H1 (cell line): ENCODE measurements at regions of chr16 and their contacts with region 1.

Region 1: DNA sequence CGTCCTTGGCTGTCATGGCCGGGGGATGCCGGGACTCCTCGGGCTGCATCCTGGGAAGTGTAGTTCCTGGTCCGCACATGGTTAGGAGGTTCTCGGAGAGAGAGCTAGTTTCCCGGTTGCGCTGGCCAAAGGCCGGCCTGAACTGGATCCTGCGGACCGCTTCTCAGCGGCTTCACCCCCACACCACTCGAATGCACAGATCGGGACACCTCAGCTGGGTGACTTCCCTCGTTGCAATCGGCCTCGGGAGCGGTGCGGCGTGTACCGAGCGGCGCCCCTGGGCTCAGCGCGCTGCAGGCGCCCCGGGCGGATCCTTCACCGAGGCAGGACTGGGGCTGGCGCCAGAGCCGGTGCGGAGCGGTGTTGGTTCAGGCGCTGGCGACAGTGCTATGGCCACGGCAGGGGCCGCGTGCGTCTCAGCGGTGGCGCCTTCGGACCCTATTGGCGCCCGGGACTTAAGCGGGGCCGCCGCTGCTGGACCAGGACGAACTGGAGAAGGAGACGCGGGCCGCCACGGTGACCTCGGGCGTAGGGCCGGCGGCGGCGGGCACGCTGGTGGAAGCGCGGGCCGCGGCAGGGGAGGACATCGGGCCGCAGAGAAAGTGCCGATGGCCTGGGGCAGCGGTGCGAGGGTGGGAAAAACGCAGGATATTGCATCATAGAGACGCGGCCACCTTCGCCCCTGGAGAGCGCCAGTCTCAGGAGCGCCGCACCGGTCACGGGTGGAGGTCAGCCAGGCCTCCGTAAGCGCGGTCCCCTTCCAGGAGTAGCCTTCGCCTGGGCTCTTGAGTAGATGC is 11.4 kb downstream of the ZNF629 start:
- DNase-seq: peak; percentile 78 to 89
- H3K4me3 ChIP-seq: peak overlapping the region; percentile 67 to 84 (median 76)
- H3K27ac ChIP-seq: peak overlapping the region; percentile 89
- H3K4me1 ChIP-seq: peaks cover 0 to 11% (median 5%) of the 10 kb centered on the region in 4 experiments; a peak in 5 of 7 replicates
- H3K27me3 ChIP-seq: no peaks in the 10 kb centered on the region
- CTCF ChIP-seq: no peak
- EP300 ChIP-seq: no peak
- POLR2A ChIP-seq: peak; percentile 85 to 87
- RAD21 ChIP-seq: no peak

Region 2: GRCh38 chr16:30731411-30731810 is 44.2 kb before region 1 on chr16:
- CTCF ChIA-PET with region 1: no interaction called
- POLR2A ChIA-PET with region 1: interaction called, 10 read pairs
- DNase-seq: no peak
- H3K4me3 ChIP-seq: no peak overlapping the region
- H3K27ac ChIP-seq: no peak overlapping the region
- H3K4me1 ChIP-seq: peaks cover 0 to 3% (median 3%) of the 10 kb centered on the region in 4 experiments; a peak in 2 of 7 replicates
- H3K27me3 ChIP-seq: no peaks in the 10 kb centered on the region
- CTCF ChIP-seq: no peak
- EP300 ChIP-seq: no peak
- POLR2A ChIP-seq: no peak
- RAD21 ChIP-seq: no peak

Region 3: DNA sequence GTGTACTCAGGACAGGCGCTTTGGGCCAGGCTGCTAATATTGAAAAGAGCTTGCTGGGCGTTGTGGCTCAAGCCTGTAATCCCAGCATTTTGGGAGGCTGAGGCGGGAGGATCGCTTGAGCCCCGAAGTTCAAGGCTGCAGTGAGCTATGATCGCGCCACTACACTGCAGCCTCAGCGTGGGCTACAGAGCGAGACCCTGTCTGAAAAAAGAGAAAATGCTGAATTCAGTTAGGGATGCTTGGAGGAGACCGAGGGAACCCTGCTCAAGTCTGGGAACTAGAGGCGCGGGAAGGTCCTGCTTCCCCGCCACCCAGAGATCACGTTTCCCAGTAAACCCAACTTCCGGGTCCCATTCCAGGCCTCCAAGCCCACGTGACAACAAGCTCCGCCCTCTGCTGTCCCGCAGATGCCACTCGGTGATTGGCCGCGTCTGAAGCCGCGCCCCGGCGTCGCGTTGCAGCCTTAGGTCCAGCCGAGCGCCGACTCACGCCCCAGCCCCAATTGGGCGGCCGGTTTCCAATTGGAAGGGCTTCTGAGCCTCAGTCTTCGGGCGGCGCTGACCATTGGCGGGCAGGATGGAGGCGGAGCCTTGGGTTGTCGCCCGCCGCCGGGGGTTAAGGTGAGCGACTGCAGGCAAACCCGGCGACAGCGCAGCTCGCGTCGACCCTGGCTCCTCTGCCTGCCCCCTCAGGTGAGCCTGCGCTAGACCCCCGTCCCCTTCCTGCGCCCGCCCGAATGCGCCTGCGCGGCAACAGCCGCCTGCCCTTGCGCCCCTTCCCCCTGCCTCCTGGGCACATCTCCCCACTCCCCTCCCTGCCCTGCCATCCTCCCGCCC is 27.6 kb before region 1 on chr16 and contains the start of gene PHKG2:
- CTCF ChIA-PET with region 1: no interaction called
- POLR2A ChIA-PET with region 1: interaction called, 59 read pairs
- DNase-seq: peak; percentile 96 to 97
- H3K4me3 ChIP-seq: peak within 1 kb of the TSS; percentile 54 to 81 (median 65)
- H3K27ac ChIP-seq: peak within 1 kb of the TSS; percentile 78
- H3K4me1 ChIP-seq: peaks cover 0 to 4% (median 0%) of the 10 kb centered on the region in 4 experiments; a peak in 2 of 7 replicates
- H3K27me3 ChIP-seq: no peaks in the 10 kb centered on the region
- CTCF ChIP-seq: no peak
- EP300 ChIP-seq: 0 out of 3 replicates have a peak, but pooled peaks of 1 of the 2 experiments have one; percentile 15
- POLR2A ChIP-seq: peak; percentile 78 to 92
- RAD21 ChIP-seq: no peak
- total RNA-seq, gene PHKG2: 36.0 and 37.2 TPM in 2 replicates

Region 4: DNA sequence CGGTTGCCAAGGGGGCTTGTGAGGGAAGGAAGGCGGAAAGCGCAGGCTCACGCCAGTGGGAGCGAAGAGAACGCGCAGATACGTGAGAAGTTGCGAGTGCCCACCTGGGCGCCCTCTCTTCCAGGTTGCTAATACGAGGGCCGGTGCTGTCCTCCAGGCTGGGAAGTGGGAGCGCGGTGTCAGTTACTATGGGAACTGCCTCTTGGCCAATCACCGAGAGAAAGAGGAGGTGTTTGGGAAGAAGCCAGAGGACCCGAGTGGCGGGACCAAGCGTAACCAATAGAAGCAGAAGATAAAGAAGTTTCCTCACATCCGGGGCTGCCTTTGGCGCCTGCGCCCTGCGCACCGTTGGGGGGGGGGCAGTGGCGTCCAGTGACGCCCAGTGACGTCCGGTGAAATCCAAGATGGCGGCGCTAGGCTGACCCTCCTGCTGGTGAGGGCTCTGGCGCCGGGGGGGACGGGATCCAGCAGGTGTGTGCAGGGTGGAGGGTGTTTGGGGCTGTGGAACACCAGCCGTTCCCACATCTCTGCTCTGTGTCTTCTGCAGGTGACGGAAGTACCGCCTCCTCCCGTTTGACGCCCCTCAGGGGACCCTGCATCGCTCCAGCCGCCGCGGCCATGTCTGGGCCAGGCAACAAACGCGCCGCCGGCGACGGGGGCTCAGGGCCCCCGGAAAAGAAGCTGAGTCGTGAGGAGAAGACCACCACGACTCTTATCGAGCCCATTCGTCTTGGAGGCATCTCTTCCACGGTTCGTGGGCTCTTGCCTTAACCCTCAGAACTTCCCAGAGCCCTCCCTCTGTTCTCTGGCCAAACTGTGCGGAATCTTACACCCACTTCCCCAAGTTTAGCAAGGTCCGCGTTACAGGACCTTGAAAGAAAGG is 13.4 kb before region 1 on chr16 and contains the starts of genes CFAP119 and RNF40:
- CTCF ChIA-PET with region 1: interaction called, 7 read pairs
- POLR2A ChIA-PET with region 1: interaction called, 63 read pairs
- DNase-seq: peak; percentile 86 to 98
- H3K4me3 ChIP-seq: peak within 1 kb of the TSS; percentile 80 to 97 (median 92)
- H3K27ac ChIP-seq: peak within 1 kb of the TSS; percentile 88
- H3K4me1 ChIP-seq: peaks cover 0 to 11% (median 2%) of the 10 kb centered on the region in 4 experiments; a peak in 4 of 7 replicates
- H3K27me3 ChIP-seq: no peaks in the 10 kb centered on the region; a peak in 1 of 7 replicates
- CTCF ChIP-seq: no peak
- EP300 ChIP-seq: no peak
- POLR2A ChIP-seq: peak; percentile 66 to 84
- RAD21 ChIP-seq: no peak
- total RNA-seq, gene CFAP119: 5.2 and 6.0 TPM in 2 replicates
- total RNA-seq, gene RNF40: 68.7 and 70.8 TPM in 2 replicates

Region 5: GRCh38 chr16:30786936-30787612 is 11.5 kb after region 1 on chr16 and contains the start of gene ZNF629:
- CTCF ChIA-PET with region 1: no interaction called
- POLR2A ChIA-PET with region 1: interaction called, 14 read pairs
- DNase-seq: peak in 1 of 2 experiments; percentile 87
- H3K4me3 ChIP-seq: peak within 1 kb of the TSS; percentile 70 to 99 (median 93)
- H3K27ac ChIP-seq: peak within 1 kb of the TSS; percentile 79
- H3K4me1 ChIP-seq: peaks cover 0 to 8% (median 0%) of the 10 kb centered on the region in 4 experiments; a peak in 2 of 7 replicates
- H3K27me3 ChIP-seq: no peaks in the 10 kb centered on the region; a peak in 1 of 7 replicates
- CTCF ChIP-seq: peak in 1 of 3 experiments; percentile 17; a peak in 1 of 4 replicates
- EP300 ChIP-seq: 0 out of 3 replicates have a peak, but pooled peaks of 1 of the 2 experiments have one; percentile 11
- POLR2A ChIP-seq: peak in 1 of 2 experiments; percentile 59; a peak in 2 of 3 replicates
- RAD21 ChIP-seq: peak in 1 of 2 experiments; percentile 17; a peak in 1 of 4 replicates
- total RNA-seq, gene ZNF629: 19.3 and 19.5 TPM in 2 replicates

Region 6: GRCh38 chr16:30805370-30806169 is 30.0 kb after region 1 on chr16:
- CTCF ChIA-PET with region 1: interaction called, 3 read pairs
- POLR2A ChIA-PET with region 1: interaction called, 25 read pairs
- DNase-seq: peak in 1 of 2 experiments; percentile 84
- H3K4me3 ChIP-seq: peak overlapping the region; percentile 60 to 78 (median 68)
- H3K27ac ChIP-seq: no peak overlapping the region
- H3K4me1 ChIP-seq: peaks cover 0 to 6% (median 4%) of the 10 kb centered on the region in 4 experiments; a peak in 4 of 7 replicates
- H3K27me3 ChIP-seq: peaks cover 0 to 18% (median 11%) of the 10 kb centered on the region in 4 experiments; a peak in 6 of 7 replicates
- CTCF ChIP-seq: no peak
- EP300 ChIP-seq: no peak; a peak in 1 of 3 replicates
- POLR2A ChIP-seq: peak in 1 of 2 experiments; percentile 86; a peak in 2 of 3 replicates
- RAD21 ChIP-seq: no peak

Region 7: DNA sequence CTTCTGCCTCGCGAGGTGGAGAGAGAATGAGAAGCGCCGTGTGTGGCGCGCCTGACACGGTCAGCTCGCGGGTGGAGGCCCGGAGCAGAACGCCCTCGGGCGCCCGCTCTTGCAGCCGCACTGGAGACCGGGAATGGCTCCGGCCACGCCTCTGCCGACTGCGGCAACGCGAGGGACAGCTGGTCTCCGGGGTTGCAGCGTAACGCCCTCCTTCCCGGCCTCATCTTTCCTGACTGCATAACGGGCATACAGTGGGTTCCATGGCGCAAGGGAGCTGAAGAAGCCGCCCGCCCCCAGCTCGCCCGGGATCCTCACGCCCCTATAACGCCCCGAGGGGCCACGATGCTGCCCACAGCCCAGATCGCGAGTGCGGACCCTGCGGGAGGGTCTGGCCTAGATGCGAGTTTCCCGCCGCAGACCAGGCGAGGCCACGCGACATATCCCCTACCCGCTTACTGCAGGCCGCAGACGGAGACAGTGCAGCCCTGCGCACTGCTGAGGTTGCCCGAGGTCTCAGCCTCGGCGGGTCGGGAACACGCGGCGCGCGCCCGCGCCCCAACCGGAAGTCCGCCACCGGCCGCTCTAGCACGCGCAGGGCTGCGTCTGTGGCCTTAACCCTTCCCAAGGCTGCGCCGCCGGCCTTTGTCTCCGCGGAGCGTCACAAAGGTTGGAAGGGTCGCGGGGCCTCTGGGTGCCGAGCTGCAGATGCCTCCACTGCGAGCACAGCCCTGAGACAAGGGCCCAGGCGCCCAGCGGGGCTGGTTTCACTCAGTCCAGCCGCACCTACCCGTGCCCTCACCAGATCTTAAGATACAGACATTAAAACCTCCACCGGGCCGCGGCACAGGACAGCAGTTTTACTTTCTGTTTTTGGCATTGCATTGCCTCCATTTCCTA is 99.5 kb after region 1 on chr16:
- CTCF ChIA-PET with region 1: interaction called, 4 read pairs
- POLR2A ChIA-PET with region 1: interaction called, 10 read pairs
- DNase-seq: peak in 1 of 2 experiments; percentile 94
- H3K4me3 ChIP-seq: peak overlapping the region; percentile 61 to 97 (median 92)
- H3K27ac ChIP-seq: peak overlapping the region; percentile 77
- H3K4me1 ChIP-seq: peaks cover 0 to 6% (median 3%) of the 10 kb centered on the region in 4 experiments; a peak in 5 of 7 replicates
- H3K27me3 ChIP-seq: peaks cover 0 to 26% (median 11%) of the 10 kb centered on the region in 4 experiments; a peak in 5 of 7 replicates
- CTCF ChIP-seq: peak in 1 of 3 experiments; percentile 11; a peak in 1 of 4 replicates
- EP300 ChIP-seq: 0 out of 3 replicates have a peak, but pooled peaks of 1 of the 2 experiments have one; percentile 44
- POLR2A ChIP-seq: peak; percentile 94 to 96
- RAD21 ChIP-seq: peak in 1 of 2 experiments; percentile 9; a peak in 1 of 4 replicates